ENCODE measurements at regions of chr18 and their contacts with region 1.

Region 1: GRCh38 chr18:58646334-58646862 is 17.5 kb upstream of the ALPK2 start:
- DNase-seq: no peak
- H3K4me3 ChIP-seq: no peak overlapping the region
- H3K27me3 ChIP-seq: no peaks in the 10 kb centered on the region
- CTCF ChIP-seq: no peak

Region 2: GRCh38 chr18:58321986-58322385 is 324.4 kb before region 1 on chr18:
- CTCF ChIA-PET with region 1: no interaction called
- POLR2A ChIA-PET with region 1: no interaction called
- DNase-seq: peak; percentile 50
- H3K4me3 ChIP-seq: no peak overlapping the region
- H3K27me3 ChIP-seq: no peaks in the 10 kb centered on the region
- CTCF ChIP-seq: peak; percentile 63

Region 3: GRCh38 chr18:58661423-58661822 is 15.0 kb after region 1 on chr18:
- CTCF ChIA-PET with region 1: interaction called, 10 read pairs
- POLR2A ChIA-PET with region 1: no interaction called
- DNase-seq: no peak
- H3K4me3 ChIP-seq: no peak overlapping the region
- H3K27me3 ChIP-seq: no peaks in the 10 kb centered on the region
- CTCF ChIP-seq: peak; percentile 56

Region 4: GRCh38 chr18:58716060-58716756 is 69.8 kb after region 1 on chr18:
- CTCF ChIA-PET with region 1: no interaction called
- POLR2A ChIA-PET with region 1: no interaction called
- DNase-seq: no peak
- H3K4me3 ChIP-seq: no peak overlapping the region
- H3K27me3 ChIP-seq: no peaks in the 10 kb centered on the region
- CTCF ChIP-seq: no peak